AG04449 (cell line): ENCODE measurements at regions of chr22 and their contacts with region 1.

Region 1: GRCh38 chr22:21001560-21002325 is at the start of gene THAP7:
- DNase-seq: peak; percentile 65
- H3K4me3 ChIP-seq: peak within 1 kb of the TSS; percentile 86
- CTCF ChIP-seq: no peak

Region 2: GRCh38 chr22:20957316-20958101 is 44.2 kb before region 1 on chr22:
- CTCF ChIA-PET with region 1: interaction called, 12 read pairs
- POLR2A ChIA-PET with region 1: no interaction called
- DNase-seq: no peak
- H3K4me3 ChIP-seq: peak overlapping the region; percentile 62
- CTCF ChIP-seq: no peak

Region 3: GRCh38 chr22:20981787-20982562 is 19.8 kb before region 1 on chr22 and contains the start of gene LZTR1:
- CTCF ChIA-PET with region 1: interaction called, 4 read pairs
- POLR2A ChIA-PET with region 1: interaction called, 20 read pairs
- DNase-seq: no peak
- H3K4me3 ChIP-seq: peak within 1 kb of the TSS; percentile 90
- CTCF ChIP-seq: peak; percentile 90

Region 4: GRCh38 chr22:20989323-20990138 is 12.2 kb before region 1 on chr22:
- CTCF ChIA-PET with region 1: interaction called, 10 read pairs
- POLR2A ChIA-PET with region 1: interaction called, 7 read pairs
- DNase-seq: no peak
- H3K4me3 ChIP-seq: no peak overlapping the region
- CTCF ChIP-seq: no peak

Region 5: DNA sequence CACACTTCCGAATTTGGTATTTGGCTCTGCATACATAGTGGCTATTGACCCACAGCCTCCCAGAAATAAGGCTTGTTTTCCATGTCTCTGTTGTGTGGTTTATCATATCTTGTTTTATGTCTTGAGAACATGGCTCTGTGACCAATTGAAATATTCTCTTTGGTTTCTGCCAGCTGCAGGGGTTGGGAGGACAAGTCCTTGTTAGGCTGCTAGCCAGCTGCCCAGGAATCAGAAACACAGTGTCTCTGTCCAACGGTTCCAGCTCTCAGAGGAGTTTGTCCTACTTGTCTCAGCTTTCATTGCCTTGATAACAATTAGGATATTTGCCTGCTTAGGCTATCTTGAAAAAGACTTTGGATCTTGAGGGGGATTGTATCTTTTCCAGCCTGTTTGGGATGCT is 36.7 kb after region 1 on chr22:
- CTCF ChIA-PET with region 1: interaction called, 4 read pairs
- POLR2A ChIA-PET with region 1: interaction called, 14 read pairs
- DNase-seq: no peak
- H3K4me3 ChIP-seq: no peak overlapping the region
- CTCF ChIP-seq: no peak